PC-9 (cell line): ENCODE measurements at regions of chr4 and their contacts with region 1.

Region 1: DNA sequence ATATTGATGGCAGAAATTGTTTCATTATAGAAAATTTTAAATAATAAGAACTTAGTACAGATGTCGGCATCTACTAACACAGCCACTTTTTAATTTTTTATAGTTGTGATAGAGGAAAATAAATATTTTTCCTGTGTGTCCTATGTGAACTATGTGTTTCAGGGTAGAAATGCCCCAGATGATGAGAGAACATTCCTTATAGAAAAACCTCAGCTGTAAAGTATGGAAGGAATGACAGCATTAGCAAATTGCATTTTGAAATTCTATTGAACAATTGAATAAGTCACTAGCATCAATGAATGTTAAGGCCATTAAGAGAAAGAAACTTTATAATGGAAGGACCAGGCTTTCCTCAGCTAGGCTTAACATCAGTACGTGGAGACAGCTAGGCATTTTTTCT is 149.2 kb downstream of the CFAP299 start:
- DNase-seq: no peak
- H3K4me3 ChIP-seq: no peak overlapping the region
- H3K27ac ChIP-seq: no peak overlapping the region
- H3K4me1 ChIP-seq: no peaks in the 10 kb centered on the region
- H3K27me3 ChIP-seq: no peaks in the 10 kb centered on the region
- CTCF ChIP-seq: no peak

Region 2: GRCh38 chr4:80608281-80608980 is 123.7 kb after region 1 on chr4:
- CTCF ChIA-PET with region 1: no interaction called
- POLR2A ChIA-PET with region 1: no interaction called
- intact Hi-C with region 1: loop called (anchors 5 kb)
- DNase-seq: no peak
- H3K4me3 ChIP-seq: no peak overlapping the region
- H3K27ac ChIP-seq: no peak overlapping the region
- H3K4me1 ChIP-seq: peaks cover 11% of the 10 kb centered on the region
- H3K27me3 ChIP-seq: no peaks in the 10 kb centered on the region
- CTCF ChIP-seq: no peak

Region 3: DNA sequence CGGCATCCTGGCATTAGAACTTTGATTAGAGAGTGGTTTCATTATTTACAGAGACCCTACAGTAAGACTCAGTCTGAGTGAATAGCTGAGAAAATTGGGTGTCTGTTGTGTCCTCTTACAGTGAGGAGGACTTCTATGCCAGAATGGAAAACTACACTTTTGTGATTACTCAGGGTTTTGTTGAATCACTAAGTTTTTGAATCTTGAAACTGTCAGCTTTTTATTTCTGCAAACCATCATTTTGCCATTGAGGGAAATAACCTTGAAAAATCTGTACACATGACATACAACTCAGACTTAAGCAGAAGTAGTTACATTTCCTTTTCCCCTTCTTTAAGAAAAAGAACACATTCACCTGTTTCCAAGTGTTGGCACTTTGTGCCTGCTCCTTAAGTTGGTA is 1104.5 kb after region 1 on chr4:
- CTCF ChIA-PET with region 1: no interaction called
- POLR2A ChIA-PET with region 1: no interaction called
- intact Hi-C with region 1: no loop called
- DNase-seq: no peak
- H3K4me3 ChIP-seq: no peak overlapping the region
- H3K27ac ChIP-seq: no peak overlapping the region
- H3K4me1 ChIP-seq: no peaks in the 10 kb centered on the region
- H3K27me3 ChIP-seq: no peaks in the 10 kb centered on the region
- CTCF ChIP-seq: no peak